ENCODE measurements at regions of chr22 and their contacts with region 1.

Region 1: DNA sequence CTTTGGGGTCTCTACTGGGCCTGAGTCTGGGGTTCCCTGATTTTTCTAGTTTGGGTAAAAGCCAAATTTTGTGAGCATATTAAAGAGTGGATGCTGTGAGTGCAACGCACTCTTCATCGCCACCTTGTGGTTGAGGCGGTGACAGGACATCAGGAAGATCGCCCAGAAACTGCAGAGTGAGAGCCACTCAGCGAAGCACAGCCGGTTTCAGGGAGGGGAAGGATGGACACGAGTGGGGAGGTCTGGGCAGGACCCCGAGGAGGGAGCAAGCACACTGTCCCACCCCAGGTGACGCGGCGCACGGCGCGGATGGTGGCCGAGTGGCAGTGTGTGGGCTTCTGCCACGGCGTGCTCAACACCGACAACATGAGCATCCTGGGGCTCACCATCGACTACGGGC is 9.1 kb downstream of the SELENOO start:
- DNase-seq: peak; percentile 64 to 83 (median 78)
- H3K4me3 ChIP-seq: no peak overlapping the region
- H3K27ac ChIP-seq: peak overlapping the region in 1 of 2 donors; percentile 4
- H3K4me1 ChIP-seq: peaks cover 4% of the 10 kb centered on the region
- H3K27me3 ChIP-seq: no peaks in the 10 kb centered on the region
- CTCF ChIP-seq: peak; percentile 70 to 86 (median 86)
- EP300 ChIP-seq: no peak
- POLR2A ChIP-seq: no peak

Region 2: DNA sequence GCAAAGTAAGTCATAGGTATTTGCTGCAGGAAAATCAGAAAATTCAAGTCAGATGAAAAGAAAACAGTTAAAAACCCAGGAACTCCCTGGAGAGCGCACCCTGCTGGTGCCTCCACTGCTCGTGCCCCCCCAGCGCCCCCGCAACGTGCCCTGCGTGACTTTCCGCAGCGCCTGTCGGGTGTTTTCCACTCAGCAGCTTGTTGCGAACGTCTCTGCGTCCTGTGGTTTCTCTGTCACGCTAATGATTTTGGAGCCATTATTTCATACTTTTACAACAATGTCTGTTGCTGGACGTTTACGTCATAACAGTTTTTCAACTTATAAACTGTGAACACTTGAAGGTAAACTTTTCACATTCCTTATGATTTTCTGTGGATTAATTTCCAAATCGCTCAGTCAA is 286.4 kb before region 1 on chr22:
- intact Hi-C with region 1: loop called in 2 of 4 experiments (anchors 5 kb)
- DNase-seq: no peak
- H3K4me3 ChIP-seq: no peak overlapping the region
- H3K27ac ChIP-seq: no peak overlapping the region
- H3K4me1 ChIP-seq: peaks cover 5% of the 10 kb centered on the region
- H3K27me3 ChIP-seq: no peaks in the 10 kb centered on the region
- CTCF ChIP-seq: no peak
- EP300 ChIP-seq: no peak
- POLR2A ChIP-seq: no peak

Region 3: DNA sequence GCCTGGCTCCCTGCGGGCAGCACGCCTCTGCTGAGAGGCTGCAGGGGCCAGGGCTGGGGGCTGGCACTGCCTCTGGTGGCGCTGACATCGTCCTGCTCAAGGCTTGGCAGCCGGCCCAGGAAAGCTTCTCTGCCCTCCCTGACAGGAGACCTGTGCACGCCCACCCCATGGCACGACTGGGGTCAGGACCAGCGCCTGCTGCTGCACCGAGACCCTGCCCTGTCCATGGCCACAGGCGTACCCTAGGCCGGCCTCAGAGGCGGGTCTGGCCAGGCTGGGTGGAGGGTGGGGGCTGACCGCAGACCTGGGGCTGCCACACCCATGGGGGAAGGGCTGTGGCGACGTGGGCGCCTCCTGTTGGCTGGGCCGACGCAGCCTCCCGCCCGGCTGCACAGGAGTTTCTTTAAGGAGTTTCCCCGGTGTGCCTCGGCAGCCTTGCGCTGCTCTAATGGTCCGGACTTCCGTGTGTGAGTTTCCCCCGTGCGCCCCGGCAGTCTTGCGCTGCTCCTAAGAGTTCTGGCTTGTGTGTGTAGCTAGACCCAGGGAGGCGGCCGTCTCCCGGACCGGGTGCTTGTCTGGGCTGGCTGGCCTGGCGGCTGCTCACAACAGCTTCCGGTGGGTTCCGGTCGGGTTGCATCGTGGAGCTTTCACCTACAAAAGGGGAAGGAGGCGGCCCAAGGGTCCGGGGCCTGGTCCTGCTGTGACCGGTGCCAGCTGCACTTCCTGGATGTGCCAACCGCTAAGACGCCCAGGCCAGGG is 19.5 kb before region 1 on chr22:
- intact Hi-C with region 1: no loop called
- DNase-seq: peak; percentile 62 to 79 (median 68)
- H3K4me3 ChIP-seq: peak overlapping the region; percentile 30
- H3K27ac ChIP-seq: peak overlapping the region; percentile 4 to 60
- H3K4me1 ChIP-seq: peaks cover 9% of the 10 kb centered on the region
- H3K27me3 ChIP-seq: no peaks in the 10 kb centered on the region
- CTCF ChIP-seq: peak in 1 of 3 donors; percentile 17
- EP300 ChIP-seq: no peak
- POLR2A ChIP-seq: no peak

Measured in ovary (tissue), 10 donors.